CD14-positive monocyte (primary cell): ENCODE measurements at regions of chr3 and their contacts with region 1.

Region 1: DNA sequence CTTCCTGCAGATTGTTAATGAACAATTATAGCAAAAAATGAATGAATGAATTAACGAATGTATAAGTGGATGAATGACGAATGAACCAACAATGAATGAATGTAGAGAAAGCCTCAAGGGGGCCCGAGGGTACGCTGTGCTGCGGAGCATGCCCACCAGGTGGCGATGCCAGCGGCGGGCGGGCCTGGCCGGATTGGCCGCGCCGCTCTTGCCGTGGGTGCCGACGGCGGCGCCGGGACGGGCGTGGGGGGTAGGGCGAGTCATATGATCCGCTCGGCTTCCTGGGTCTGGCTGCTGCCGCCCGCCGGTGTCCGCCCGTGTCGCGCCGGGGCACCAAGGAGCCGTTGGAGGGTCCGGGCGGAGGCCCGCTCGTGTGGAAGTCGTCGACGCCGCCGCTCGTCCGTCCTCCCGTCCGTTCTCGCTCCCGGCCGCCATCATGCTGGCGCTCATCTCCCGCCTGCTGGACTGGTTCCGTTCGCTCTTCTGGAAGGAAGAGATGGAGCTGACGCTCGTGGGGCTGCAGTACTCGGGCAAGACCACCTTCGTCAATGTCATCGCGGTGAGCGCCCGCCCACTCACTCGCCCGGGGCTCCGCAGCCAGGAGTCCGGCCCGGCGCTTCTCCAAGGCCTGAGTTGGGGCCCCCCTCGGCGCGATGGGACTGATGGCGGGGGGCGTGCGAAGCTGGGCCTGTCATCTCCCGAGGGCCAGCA is at the start of gene ARL8B:
- DNase-seq: peak; percentile 88 to 90 (median 90)
- H3K4me3 ChIP-seq: peak within 1 kb of the TSS; percentile 77 to 98 (median 83)
- H3K4me3 Mint-ChIP-seq: peak within 1 kb of the TSS; percentile 93 to 96
- H3K27ac ChIP-seq: peak within 1 kb of the TSS; percentile 99 to 100
- H3K27ac Mint-ChIP-seq: peak within 1 kb of the TSS; percentile 97 to 99 (median 99)
- H3K4me1 ChIP-seq: peaks cover 40 to 48% of the 10 kb centered on the region in 2 donors
- H3K4me1 Mint-ChIP-seq: peaks cover 36% of the 10 kb centered on the region
- H3K27me3 ChIP-seq: no peaks in the 10 kb centered on the region
- H3K27me3 Mint-ChIP-seq: peaks cover 0 to 1% (median 0%) of the 10 kb centered on the region in 3 donors
- CTCF ChIP-seq: peak; percentile 98
- polyA plus RNA-seq, gene ARL8B: 46.6 to 121 (median 101) TPM

Region 2: DNA sequence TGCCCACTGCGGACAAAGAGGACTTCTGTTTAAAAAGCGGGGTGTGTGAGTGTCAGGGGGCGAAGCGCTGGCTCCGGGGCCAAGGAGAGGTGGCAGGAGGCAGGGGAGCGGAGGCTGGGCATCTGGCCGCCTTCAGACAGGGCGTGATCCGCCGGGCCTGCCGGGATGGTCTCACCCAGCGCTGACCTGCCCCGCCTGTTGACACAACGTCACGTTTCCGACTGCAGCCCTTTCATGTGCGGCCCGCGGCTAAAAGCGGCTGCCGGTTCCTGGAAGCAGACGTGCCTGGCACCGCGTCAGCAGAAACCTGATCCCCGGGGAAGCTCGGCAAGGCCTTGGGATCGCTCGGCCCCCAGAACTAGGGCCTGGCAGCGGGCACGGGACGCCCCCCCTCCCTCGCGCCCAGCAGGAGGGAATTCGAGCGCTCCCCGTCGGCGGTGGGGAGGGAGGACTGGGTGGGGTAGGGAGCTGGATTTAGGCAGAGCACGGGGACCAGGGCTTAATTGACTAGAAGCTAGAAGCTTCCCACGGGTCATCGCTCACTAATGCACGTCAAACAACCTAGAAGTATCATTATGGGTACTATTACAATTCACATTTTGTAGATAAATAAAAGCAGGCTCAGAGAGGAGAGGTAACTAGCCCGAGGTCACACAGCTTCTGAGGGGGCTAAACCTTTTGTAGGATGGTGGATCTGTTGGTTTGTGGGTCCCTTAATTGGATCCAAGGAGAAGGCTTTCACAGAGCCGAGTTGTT is 135.2 kb before region 1 on chr3:
- intact Hi-C with region 1: loop called in 1 of 2 experiments (anchors 10 kb)
- DNase-seq: peak; percentile 89 to 94 (median 92)
- H3K4me3 ChIP-seq: peak overlapping the region; percentile 43 to 71 (median 46)
- H3K4me3 Mint-ChIP-seq: peak overlapping the region; percentile 79 to 90
- H3K27ac ChIP-seq: peak overlapping the region; percentile 68 to 91
- H3K27ac Mint-ChIP-seq: peak overlapping the region; percentile 90 to 96 (median 95)
- H3K4me1 ChIP-seq: peaks cover 82 to 88% of the 10 kb centered on the region in 2 donors
- H3K4me1 Mint-ChIP-seq: peaks cover 80% of the 10 kb centered on the region
- H3K27me3 ChIP-seq: no peaks in the 10 kb centered on the region
- H3K27me3 Mint-ChIP-seq: peaks cover 0 to 7% (median 1%) of the 10 kb centered on the region in 3 donors
- CTCF ChIP-seq: no peak

Region 3: GRCh38 chr3:5016218-5017161 is 105.7 kb before region 1 on chr3:
- intact Hi-C with region 1: loop called in 1 of 2 experiments (anchors 10 kb)
- DNase-seq: peak; percentile 66 to 84 (median 79)
- H3K4me3 ChIP-seq: no peak overlapping the region
- H3K4me3 Mint-ChIP-seq: peak overlapping the region in 1 of 2 donors; percentile 54
- H3K27ac ChIP-seq: peak overlapping the region; percentile 10 to 70
- H3K27ac Mint-ChIP-seq: peak overlapping the region; percentile 9 to 95 (median 87)
- H3K4me1 ChIP-seq: peaks cover 73 to 83% of the 10 kb centered on the region in 2 donors
- H3K4me1 Mint-ChIP-seq: peaks cover 90% of the 10 kb centered on the region
- H3K27me3 ChIP-seq: no peaks in the 10 kb centered on the region
- H3K27me3 Mint-ChIP-seq: peaks cover 0 to 2% (median 0%) of the 10 kb centered on the region in 3 donors
- CTCF ChIP-seq: no peak

Region 4: GRCh38 chr3:5136211-5136918 is 14.2 kb after region 1 on chr3:
- intact Hi-C with region 1: loop called in 1 of 2 experiments (anchors 2 kb)
- DNase-seq: peak; percentile 54 to 76 (median 54)
- H3K4me3 ChIP-seq: no peak overlapping the region
- H3K4me3 Mint-ChIP-seq: peak overlapping the region in 1 of 2 donors; percentile 54
- H3K27ac ChIP-seq: peak overlapping the region; percentile 29 to 94
- H3K27ac Mint-ChIP-seq: peak overlapping the region; percentile 73 to 98 (median 93)
- H3K4me1 ChIP-seq: peaks cover 63 to 71% of the 10 kb centered on the region in 2 donors
- H3K4me1 Mint-ChIP-seq: peaks cover 80% of the 10 kb centered on the region
- H3K27me3 ChIP-seq: no peaks in the 10 kb centered on the region
- H3K27me3 Mint-ChIP-seq: no peaks in the 10 kb centered on the region
- CTCF ChIP-seq: peak; percentile 45

Region 5: GRCh38 chr3:5194341-5195159 is 72.4 kb after region 1 on chr3:
- intact Hi-C with region 1: loop called (anchors 2 kb)
- DNase-seq: peak; percentile 76 to 95 (median 94)
- H3K4me3 ChIP-seq: peak overlapping the region in 1 of 3 experiments; percentile 31
- H3K4me3 Mint-ChIP-seq: no peak overlapping the region
- H3K27ac ChIP-seq: peak overlapping the region in 1 of 2 donors; percentile 88
- H3K27ac Mint-ChIP-seq: peak overlapping the region; percentile 93 to 97 (median 95)
- H3K4me1 ChIP-seq: peaks cover 86 to 97% of the 10 kb centered on the region in 2 donors
- H3K4me1 Mint-ChIP-seq: peaks cover 88% of the 10 kb centered on the region
- H3K27me3 ChIP-seq: no peaks in the 10 kb centered on the region
- H3K27me3 Mint-ChIP-seq: no peaks in the 10 kb centered on the region
- CTCF ChIP-seq: no peak